ENCODE measurements at regions of chr17 and their contacts with region 1.

Region 1: DNA sequence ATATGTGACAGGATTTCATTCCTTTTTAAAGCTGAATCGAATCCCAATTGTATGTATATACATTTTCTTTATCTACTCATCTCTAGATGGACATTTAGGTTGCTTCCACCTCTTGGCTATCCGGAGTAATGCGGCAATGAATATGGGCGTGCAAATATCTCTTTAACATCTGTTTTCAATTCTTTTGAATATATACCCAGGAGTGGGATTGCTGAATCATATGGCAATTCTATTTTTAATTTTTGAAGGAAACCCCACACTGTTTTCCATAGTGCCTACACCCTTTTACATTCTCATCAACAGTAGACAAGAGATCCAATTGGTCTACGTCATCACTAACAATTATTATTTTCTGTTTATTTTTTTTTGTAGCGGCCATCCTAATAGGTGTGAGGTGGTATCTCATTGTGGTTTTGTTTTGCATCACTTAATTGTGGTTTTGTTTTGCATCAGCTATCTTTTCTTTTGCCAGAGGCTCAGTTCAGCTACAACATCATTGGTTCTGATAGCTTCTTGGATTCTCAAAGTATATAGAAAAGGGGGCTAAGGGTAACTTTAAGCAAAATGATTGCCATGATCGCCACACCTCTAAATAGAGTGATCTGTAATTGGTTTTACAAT is 25.6 kb upstream of the MAP2K6 start:
- DNase-seq: no peak
- H3K4me3 ChIP-seq: no peak overlapping the region
- H3K27ac ChIP-seq: no peak overlapping the region
- H3K4me1 ChIP-seq: no peaks in the 10 kb centered on the region
- H3K27me3 ChIP-seq: no peaks in the 10 kb centered on the region
- CTCF ChIP-seq: no peak
- EP300 ChIP-seq: no peak
- RAD21 ChIP-seq: no peak

Region 2: GRCh38 chr17:69375229-69375628 is 13.7 kb before region 1 on chr17:
- CTCF ChIA-PET with region 1: interaction called, 14 read pairs
- POLR2A ChIA-PET with region 1: no interaction called
- DNase-seq: no peak
- H3K4me3 ChIP-seq: no peak overlapping the region
- H3K27ac ChIP-seq: no peak overlapping the region
- H3K4me1 ChIP-seq: no peaks in the 10 kb centered on the region
- H3K27me3 ChIP-seq: no peaks in the 10 kb centered on the region
- CTCF ChIP-seq: no peak
- EP300 ChIP-seq: no peak
- RAD21 ChIP-seq: no peak

Region 3: DNA sequence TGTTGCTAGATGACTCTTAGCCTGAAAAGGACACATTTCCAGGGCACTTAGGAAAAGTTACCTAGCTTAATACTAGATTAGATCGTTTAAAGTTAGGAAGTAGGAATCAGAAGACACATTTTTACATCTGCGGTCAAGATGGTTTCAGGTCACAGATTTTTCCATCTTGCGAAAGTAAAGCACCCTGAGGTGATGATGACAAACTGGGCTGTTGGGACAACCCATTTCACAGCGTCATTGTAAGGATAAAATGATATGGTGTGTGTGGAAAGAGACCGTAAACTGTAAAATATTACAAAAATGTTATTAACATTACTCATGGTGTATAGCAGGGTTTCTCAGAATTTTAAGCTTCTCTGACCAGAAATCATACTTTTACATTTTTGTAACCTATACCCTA is 15.4 kb after region 1 on chr17:
- CTCF ChIA-PET with region 1: interaction called, 19 read pairs
- POLR2A ChIA-PET with region 1: no interaction called
- DNase-seq: no peak
- H3K4me3 ChIP-seq: no peak overlapping the region
- H3K27ac ChIP-seq: no peak overlapping the region
- H3K4me1 ChIP-seq: no peaks in the 10 kb centered on the region
- H3K27me3 ChIP-seq: no peaks in the 10 kb centered on the region
- CTCF ChIP-seq: no peak
- EP300 ChIP-seq: no peak
- RAD21 ChIP-seq: no peak